ENCODE measurements at regions of chr5 and their contacts with region 1.

Region 1: DNA sequence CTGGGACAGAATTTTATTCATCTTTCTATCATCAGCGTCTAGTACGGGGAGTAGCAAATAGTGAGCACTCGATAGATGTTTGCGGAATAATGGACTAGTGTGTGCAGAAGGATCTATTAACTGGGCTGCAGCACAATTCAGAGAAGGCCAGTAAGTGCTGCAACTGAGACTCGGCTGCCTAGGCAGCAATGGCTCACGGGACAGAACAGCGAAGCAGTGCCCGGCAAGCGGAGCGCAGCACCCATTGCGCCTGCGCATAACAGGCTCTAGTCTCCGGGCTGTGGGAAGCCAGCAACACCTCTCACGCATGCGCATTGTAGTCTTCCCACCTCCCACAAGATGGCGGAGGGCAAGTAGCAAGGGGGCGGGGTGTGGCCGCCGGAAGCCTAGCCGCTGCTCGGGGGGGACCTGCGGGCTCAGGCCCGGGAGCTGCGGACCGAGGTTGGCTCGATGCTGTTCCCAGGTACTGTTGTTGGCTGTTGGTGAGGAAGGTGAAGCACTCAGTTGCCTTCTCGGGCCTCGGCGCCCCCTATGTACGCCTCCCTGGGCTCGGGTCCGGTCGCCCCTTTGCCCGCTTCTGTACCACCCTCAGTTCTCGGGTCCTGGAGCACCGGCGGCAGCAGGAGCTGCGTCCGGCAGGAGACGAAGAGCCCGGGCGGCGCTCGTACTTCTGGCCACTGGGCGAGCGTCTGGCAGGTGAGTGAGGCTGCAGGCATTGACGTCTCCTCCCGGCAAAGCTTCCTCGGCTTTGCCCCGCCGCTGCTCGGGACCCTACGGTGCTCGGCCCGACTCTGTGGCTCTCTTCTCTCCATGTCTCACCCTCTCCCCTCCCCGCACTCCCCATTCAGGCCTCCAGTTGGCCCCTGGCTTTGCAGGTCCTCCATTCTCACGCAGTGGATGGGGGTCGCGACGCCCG is 30.2 kb upstream of the APC start:
- DNase-seq: peak; percentile 96 to 100 (median 98)

Region 2: GRCh38 chr5:112737463-112738190 is 30.2 kb after region 1 on chr5 and contains the start of gene APC:
- intact Hi-C with region 1: loop called (anchors 1 kb)
- DNase-seq: peak; percentile 98 to 100 (median 99)